Gastrocnemius medialis (tissue), 4 donors: ENCODE measurements at regions of chr5 and their contacts with region 1.

Region 1: GRCh38 chr5:150000256-150000989 is at the starts of genes HMGXB3 and TIGD6:
- DNase-seq: peak; percentile 92 to 94
- ATAC-seq: peak; percentile 89 to 93
- H3K4me3 ChIP-seq: peak within 1 kb of the TSS; percentile 78 to 100 (median 94)
- H3K27ac ChIP-seq: peak within 1 kb of the TSS; percentile 95 to 98 (median 96)
- H3K4me1 ChIP-seq: peaks cover 31% of the 10 kb centered on the region in 2 donors
- H3K27me3 ChIP-seq: no peaks in the 10 kb centered on the region
- CTCF ChIP-seq: peak in 1 of 5 experiments; percentile 21
- POLR2A ChIP-seq: peak; percentile 86 to 90
- total RNA-seq, gene HMGXB3: 19.7 to 27.0 (median 23.9) TPM
- total RNA-seq, gene TIGD6: 0.62 to 3.0 (median 2.3) TPM

Region 2: GRCh38 chr5:149345147-149345875 is 655.1 kb before region 1 on chr5 and contains the start of gene GRPEL2:
- in situ Hi-C with region 1: no loop called
- intact Hi-C with region 1: loop called (anchors 5 kb)
- DNase-seq: peak; percentile 93 to 95
- ATAC-seq: peak; percentile 99
- H3K4me3 ChIP-seq: peak within 1 kb of the TSS; percentile 58 to 96 (median 79)
- H3K27ac ChIP-seq: peak within 1 kb of the TSS; percentile 84 to 89 (median 87)
- H3K4me1 ChIP-seq: peaks cover 13 to 16% of the 10 kb centered on the region in 2 donors
- H3K27me3 ChIP-seq: no peaks in the 10 kb centered on the region
- CTCF ChIP-seq: no peak
- POLR2A ChIP-seq: peak; percentile 57 to 69
- total RNA-seq, gene GRPEL2: 7.8 to 13.3 (median 9.9) TPM

Region 3: DNA sequence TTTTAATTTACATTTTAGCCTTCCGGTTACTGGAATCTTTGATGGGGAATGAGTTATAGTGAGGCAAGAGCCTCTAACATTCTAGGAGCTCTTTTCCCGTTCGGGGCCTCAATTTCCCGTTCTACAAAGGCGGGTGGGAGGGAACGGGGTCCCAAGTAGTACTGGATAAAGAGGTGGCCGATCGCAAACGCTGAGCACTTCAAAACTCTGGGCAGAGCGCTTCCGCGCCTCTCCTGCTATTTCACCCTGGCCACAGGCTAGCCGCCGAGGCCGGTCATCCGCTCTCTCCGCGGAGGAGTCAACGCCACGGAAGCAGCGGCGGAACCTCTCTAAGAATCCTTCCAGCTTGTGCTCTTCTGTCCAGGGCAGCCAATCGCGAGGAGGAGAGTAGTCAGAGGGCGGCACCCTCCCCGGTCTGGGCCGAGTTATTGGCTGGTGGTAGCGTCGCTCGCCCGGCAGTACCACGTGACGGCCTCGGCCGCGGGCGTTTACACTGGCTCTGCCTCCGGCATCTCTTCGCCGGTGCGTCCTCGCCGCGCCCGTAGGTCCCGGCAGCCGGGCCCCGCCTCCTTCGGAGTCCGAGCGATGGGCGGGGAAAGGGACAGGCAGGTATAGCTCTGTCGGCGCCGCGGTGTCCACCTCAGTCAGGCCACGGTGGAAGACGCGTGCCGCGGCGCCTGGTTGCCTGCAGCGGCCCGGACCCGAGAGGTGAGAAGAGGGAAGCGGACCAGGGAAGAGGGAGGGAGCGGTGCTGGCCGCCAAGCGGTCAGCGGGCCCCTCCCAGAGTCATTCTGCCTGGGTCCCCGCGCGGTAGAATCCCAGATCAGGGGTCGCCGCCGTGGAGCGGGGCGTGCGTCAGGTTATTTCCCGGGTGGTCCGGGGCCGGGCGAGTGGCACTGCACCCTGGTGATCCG is 39.9 kb before region 1 on chr5 and contains the start of gene SLC26A2:
- in situ Hi-C with region 1: no loop called
- intact Hi-C with region 1: loop called (anchors 2 kb)
- DNase-seq: peak; percentile 98 to 99
- ATAC-seq: peak; percentile 97 to 99
- H3K4me3 ChIP-seq: peak within 1 kb of the TSS; percentile 83 to 97 (median 93)
- H3K27ac ChIP-seq: peak within 1 kb of the TSS; percentile 89 to 93 (median 90)
- H3K4me1 ChIP-seq: peaks cover 8 to 15% of the 10 kb centered on the region in 2 donors
- H3K27me3 ChIP-seq: no peaks in the 10 kb centered on the region
- CTCF ChIP-seq: peak in 1 of 5 experiments; percentile 14
- POLR2A ChIP-seq: peak; percentile 93 to 97
- total RNA-seq, gene SLC26A2: 3.0 to 9.9 (median 6.9) TPM

Region 4: GRCh38 chr5:150022163-150022540 is 21.7 kb after region 1 on chr5:
- in situ Hi-C with region 1: no loop called
- intact Hi-C with region 1: loop called (anchors 2 kb)
- DNase-seq: no peak
- ATAC-seq: peak; percentile 70 to 82
- H3K4me3 ChIP-seq: peak overlapping the region in 1 of 4 donors; percentile 17
- H3K27ac ChIP-seq: peak overlapping the region; percentile 77 to 82 (median 80)
- H3K4me1 ChIP-seq: peaks cover 31 to 48% of the 10 kb centered on the region in 2 donors
- H3K27me3 ChIP-seq: no peaks in the 10 kb centered on the region
- CTCF ChIP-seq: no peak
- POLR2A ChIP-seq: no peak

Region 5: DNA sequence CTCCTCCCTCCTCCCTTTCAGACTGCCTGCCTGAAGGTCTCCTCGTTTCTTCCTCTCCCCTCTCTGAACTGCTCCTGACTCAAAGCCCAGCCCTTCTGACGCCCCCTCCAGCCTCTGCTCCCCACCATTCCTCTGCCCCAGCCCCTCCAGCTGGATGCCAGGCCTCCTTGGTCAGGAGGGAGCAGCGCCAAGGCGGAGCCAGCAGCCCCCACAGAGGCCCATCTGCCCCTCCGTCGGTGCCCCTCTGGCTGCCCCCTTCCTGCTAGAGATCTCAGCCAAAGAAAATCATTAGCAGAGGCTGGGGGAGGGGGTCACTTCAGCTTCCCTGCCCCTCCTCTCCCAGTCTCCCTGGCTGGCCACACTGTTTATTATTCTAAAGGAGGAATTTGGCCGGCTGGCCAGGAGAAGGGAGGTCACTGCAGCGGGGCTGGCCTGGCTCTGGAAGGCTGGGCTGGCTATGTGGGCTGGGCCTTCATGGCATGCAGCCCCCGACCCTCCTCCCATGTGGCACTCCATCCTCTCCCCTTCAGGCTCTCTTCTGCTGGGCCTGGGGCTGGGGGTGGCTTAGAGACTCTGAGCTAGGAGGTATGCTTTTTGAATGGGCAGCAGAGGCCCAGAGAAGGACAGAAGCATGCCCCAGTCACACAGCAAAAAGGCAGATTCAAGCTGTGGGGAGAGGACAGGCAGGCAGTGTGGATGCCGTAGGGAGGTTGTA is 138.3 kb after region 1 on chr5:
- in situ Hi-C with region 1: no loop called
- intact Hi-C with region 1: no loop called
- DNase-seq: no peak
- ATAC-seq: no peak
- H3K4me3 ChIP-seq: peak overlapping the region in 2 of 4 donors; percentile 8 to 13
- H3K27ac ChIP-seq: peak overlapping the region; percentile 75 to 82 (median 78)
- H3K4me1 ChIP-seq: peaks cover 5 to 12% of the 10 kb centered on the region in 2 donors
- H3K27me3 ChIP-seq: no peaks in the 10 kb centered on the region
- CTCF ChIP-seq: no peak
- POLR2A ChIP-seq: no peak

Region 6: GRCh38 chr5:150377964-150378694 is 377.7 kb after region 1 on chr5:
- in situ Hi-C with region 1: no loop called
- intact Hi-C with region 1: no loop called
- DNase-seq: no peak
- ATAC-seq: no peak
- H3K4me3 ChIP-seq: no peak overlapping the region
- H3K27ac ChIP-seq: no peak overlapping the region
- H3K4me1 ChIP-seq: no peaks in the 10 kb centered on the region
- H3K27me3 ChIP-seq: no peaks in the 10 kb centered on the region
- CTCF ChIP-seq: no peak
- POLR2A ChIP-seq: no peak